Dendritic cell treated with granulocyte-macrophage colony-stimulating factor and Interleukin-4, amounts not matched to agents 40 ng/mL and 50 ng/mL, for 4 days (primary cell): ENCODE measurements at regions of chr12 and their contacts with region 1.

Region 1: GRCh38 chr12:90854136-90854689 is 100.8 kb downstream of the CCER1 start:
- H3K4me3 Mint-ChIP-seq: no peak overlapping the region
- H3K27ac Mint-ChIP-seq: no peak overlapping the region
- H3K4me1 Mint-ChIP-seq: no peaks in the 10 kb centered on the region
- H3K27me3 Mint-ChIP-seq: no peaks in the 10 kb centered on the region

Region 2: DNA sequence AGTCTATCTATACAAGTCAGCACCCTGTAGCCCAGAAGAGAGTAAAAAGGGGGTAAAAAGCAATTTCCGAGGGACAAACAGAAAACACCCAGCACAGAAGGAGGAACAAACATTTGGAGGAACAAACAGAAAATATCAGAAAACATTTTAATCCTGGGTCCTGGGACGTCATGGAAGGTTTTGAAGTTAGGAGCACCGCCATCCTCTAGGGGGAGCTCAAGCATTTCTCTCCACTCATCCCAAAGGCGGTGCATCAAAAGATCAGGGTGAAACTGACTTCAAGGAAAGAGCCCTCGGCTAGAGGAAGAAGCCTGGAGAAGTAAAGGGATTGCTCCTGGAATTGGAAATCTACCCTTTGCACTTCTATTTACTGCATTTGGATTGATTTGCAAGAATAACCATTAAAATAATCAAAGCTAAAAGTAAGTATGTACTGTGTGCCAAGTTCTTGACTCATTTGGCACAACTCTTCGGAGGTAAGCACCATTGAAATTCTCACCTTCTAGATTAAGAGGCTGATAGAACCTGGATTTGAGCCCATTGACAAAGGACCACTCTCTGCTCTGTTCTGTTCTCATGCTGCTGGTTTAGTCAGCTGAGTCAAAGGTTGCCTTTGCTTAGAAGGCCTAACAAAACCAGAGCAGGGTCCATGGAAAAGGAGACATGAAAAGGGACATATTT is 1311.2 kb before region 1 on chr12:
- intact Hi-C with region 1: loop called (anchors 5 kb)
- H3K4me3 Mint-ChIP-seq: no peak overlapping the region
- H3K27ac Mint-ChIP-seq: peak overlapping the region; percentile 4
- H3K4me1 Mint-ChIP-seq: peaks cover 30% of the 10 kb centered on the region
- H3K27me3 Mint-ChIP-seq: peaks cover 1% of the 10 kb centered on the region

Region 3: GRCh38 chr12:90842477-90842876 is 11.7 kb before region 1 on chr12:
- intact Hi-C with region 1: no loop called
- H3K4me3 Mint-ChIP-seq: no peak overlapping the region
- H3K27ac Mint-ChIP-seq: no peak overlapping the region
- H3K4me1 Mint-ChIP-seq: no peaks in the 10 kb centered on the region
- H3K27me3 Mint-ChIP-seq: no peaks in the 10 kb centered on the region

Region 4: DNA sequence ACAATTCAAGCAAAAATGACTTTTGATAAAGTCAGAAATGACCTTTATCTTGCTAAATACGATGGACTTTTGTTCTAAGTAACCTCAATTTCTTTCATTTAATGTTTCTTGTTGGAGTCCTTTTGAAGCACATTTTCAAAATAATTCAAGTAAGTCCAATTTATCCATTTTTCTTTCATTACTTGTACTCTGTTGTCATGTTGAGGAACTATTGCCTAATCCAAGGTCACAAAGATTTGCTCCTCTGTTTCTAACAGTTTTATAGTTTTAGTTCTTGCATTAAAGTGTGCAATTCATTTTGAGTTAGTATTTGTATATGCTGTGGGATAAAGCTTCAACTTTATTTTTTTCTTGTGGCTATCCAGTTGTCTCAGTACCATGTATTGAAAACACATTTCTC is 34.1 kb after region 1 on chr12:
- intact Hi-C with region 1: no loop called
- H3K4me3 Mint-ChIP-seq: no peak overlapping the region
- H3K27ac Mint-ChIP-seq: no peak overlapping the region
- H3K4me1 Mint-ChIP-seq: no peaks in the 10 kb centered on the region
- H3K27me3 Mint-ChIP-seq: no peaks in the 10 kb centered on the region

Region 5: GRCh38 chr12:90987520-90987919 is 133.3 kb after region 1 on chr12:
- intact Hi-C with region 1: no loop called
- H3K4me3 Mint-ChIP-seq: no peak overlapping the region
- H3K27ac Mint-ChIP-seq: no peak overlapping the region
- H3K4me1 Mint-ChIP-seq: no peaks in the 10 kb centered on the region
- H3K27me3 Mint-ChIP-seq: no peaks in the 10 kb centered on the region

Region 6: GRCh38 chr12:91058786-91059185 is 204.6 kb after region 1 on chr12:
- intact Hi-C with region 1: no loop called
- H3K4me3 Mint-ChIP-seq: no peak overlapping the region
- H3K27ac Mint-ChIP-seq: no peak overlapping the region
- H3K4me1 Mint-ChIP-seq: no peaks in the 10 kb centered on the region
- H3K27me3 Mint-ChIP-seq: no peaks in the 10 kb centered on the region